ENCODE measurements at regions of chr15 and their contacts with region 1.

Region 1: GRCh38 chr15:33292717-33293307 is 18.0 kb upstream of the RYR3 start:
- DNase-seq: peak; percentile 79
- H3K4me3 Mint-ChIP-seq: no peak overlapping the region
- H3K27ac Mint-ChIP-seq: no peak overlapping the region
- H3K4me1 Mint-ChIP-seq: peaks cover 20% of the 10 kb centered on the region
- H3K27me3 Mint-ChIP-seq: no peaks in the 10 kb centered on the region
- CTCF ChIP-seq: peak; percentile 88

Region 2: DNA sequence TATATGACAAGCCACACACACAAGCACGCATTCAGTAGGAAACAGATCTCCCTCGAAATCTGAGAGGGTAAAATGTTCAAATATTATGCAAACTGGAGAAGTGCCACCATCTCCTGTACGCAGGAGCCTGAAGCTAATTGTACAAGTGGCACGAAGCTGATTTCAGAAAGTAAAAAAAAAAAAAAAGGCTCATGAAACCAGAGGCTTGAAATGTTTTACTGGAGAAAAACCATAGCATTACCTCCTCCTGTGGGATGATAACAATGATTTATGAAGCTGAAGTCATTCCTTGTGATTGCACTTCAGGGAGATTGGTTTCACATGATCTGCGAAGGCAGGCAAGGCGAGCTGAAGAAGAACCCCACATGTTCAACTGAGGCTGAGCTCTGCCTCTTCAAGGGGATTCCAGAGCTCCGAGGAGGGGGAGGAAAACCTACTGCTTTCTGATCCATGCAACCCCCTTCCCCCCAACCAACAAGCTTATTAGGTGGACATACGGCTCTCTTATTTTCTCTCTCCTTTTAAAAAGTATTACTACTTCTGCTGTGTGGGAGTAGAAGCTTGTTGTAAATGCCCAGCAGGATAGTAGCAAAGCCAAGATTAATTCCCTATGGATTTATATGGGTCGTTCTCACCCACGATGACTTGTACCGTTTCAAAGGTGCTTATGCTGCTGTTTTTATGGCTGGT is 473.9 kb before region 1 on chr15:
- CTCF ChIA-PET with region 1: no interaction called
- POLR2A ChIA-PET with region 1: no interaction called
- intact Hi-C with region 1: no loop called
- DNase-seq: no peak
- H3K4me3 Mint-ChIP-seq: no peak overlapping the region
- H3K27ac Mint-ChIP-seq: no peak overlapping the region
- H3K4me1 Mint-ChIP-seq: no peaks in the 10 kb centered on the region
- H3K27me3 Mint-ChIP-seq: no peaks in the 10 kb centered on the region
- CTCF ChIP-seq: no peak

Region 3: DNA sequence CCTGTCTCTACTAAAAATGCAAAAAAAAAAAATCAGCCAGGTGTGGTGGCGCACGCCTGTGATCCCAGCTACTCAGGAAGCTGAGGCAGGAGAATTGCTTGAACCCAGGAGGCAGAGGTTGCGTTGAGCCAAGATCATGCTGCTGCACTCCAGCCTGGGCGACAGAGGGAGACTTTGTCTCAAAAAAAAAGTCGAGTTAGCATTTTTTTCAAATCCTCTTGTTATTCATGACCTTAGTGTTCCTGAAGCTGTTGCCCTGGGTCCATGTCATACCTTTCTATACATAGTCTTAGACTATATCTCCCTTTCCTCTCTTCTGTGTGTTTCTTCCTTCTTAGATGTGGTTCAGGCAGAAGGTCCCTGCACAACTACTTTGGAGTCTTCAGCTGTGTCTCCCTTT is 104.7 kb before region 1 on chr15:
- CTCF ChIA-PET with region 1: no interaction called
- POLR2A ChIA-PET with region 1: no interaction called
- intact Hi-C with region 1: no loop called
- DNase-seq: no peak
- H3K4me3 Mint-ChIP-seq: no peak overlapping the region
- H3K27ac Mint-ChIP-seq: no peak overlapping the region
- H3K4me1 Mint-ChIP-seq: no peaks in the 10 kb centered on the region
- H3K27me3 Mint-ChIP-seq: peaks cover 17% of the 10 kb centered on the region
- CTCF ChIP-seq: no peak

Region 4: GRCh38 chr15:33234014-33234461 is 58.8 kb before region 1 on chr15:
- CTCF ChIA-PET with region 1: interaction called, 26 read pairs
- POLR2A ChIA-PET with region 1: no interaction called
- intact Hi-C with region 1: loop called (anchors 2 kb)
- DNase-seq: peak; percentile 73
- H3K4me3 Mint-ChIP-seq: no peak overlapping the region
- H3K27ac Mint-ChIP-seq: no peak overlapping the region
- H3K4me1 Mint-ChIP-seq: no peaks in the 10 kb centered on the region
- H3K27me3 Mint-ChIP-seq: no peaks in the 10 kb centered on the region
- CTCF ChIP-seq: peak; percentile 63

Region 5: DNA sequence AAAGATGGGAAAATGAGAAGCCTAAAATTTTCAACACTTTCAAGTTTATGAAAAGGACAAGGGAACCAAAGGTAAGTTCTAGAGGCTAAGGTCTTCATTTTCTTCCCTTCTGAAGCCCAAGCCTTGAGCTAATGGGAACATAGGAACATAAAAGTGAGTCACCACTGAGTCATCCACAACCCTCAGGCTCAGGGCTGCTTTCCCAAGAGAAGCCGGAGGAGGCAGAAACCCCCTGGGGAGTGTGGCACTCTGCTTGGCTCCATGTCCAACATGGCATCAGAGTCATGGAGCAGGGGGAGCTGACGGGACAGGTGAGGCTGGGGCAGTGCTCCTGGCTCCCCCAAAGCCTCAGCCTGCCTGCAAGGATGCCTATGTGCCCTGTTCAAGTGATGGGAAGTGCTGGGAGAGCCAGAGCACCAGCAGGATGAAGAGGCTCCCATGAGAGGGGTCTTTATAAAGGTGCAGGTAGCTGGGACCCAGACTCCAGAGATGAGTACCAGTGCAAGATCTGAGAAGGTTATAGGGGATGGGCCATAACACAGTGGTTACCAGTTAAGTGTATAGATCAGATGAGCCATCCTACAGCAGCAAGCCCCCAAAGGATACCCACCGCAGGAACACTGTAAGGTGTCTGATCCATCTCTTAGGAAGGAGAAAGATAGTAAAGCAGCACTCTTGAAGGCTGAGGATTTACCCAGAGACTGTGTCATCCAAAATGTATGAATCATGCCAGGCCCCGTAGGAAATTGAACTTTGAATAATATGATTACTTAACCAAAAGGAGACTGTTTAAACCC is 13.8 kb before region 1 on chr15:
- CTCF ChIA-PET with region 1: interaction called, 73 read pairs
- POLR2A ChIA-PET with region 1: interaction called, 3 read pairs
- intact Hi-C with region 1: no loop called
- DNase-seq: peak; percentile 97
- H3K4me3 Mint-ChIP-seq: peak overlapping the region; percentile 15
- H3K27ac Mint-ChIP-seq: peak overlapping the region; percentile 77
- H3K4me1 Mint-ChIP-seq: peaks cover 18% of the 10 kb centered on the region
- H3K27me3 Mint-ChIP-seq: no peaks in the 10 kb centered on the region
- CTCF ChIP-seq: peak; percentile 10

Region 6: DNA sequence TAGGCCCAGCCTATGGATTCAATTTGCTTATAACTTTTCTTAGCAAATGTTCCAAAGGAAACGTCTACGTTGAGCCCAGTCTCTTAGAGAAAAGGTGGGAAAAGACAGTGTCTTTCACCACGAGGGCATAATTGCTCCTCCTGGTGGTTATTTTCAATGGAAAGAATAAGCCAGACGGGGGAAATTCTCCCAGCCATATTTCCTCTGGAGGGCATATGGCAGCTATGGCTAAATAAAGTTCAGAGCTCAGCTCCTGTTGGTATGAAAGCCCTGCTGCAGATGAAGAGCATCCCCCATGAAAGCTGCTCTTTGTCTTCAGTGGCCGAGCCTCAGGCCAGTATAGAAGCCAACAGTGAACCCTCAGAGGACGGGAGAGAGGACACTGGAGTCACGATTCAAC is 315.9 kb after region 1 on chr15:
- CTCF ChIA-PET with region 1: interaction called, 3 read pairs
- POLR2A ChIA-PET with region 1: no interaction called
- intact Hi-C with region 1: loop called (anchors 1 kb)
- DNase-seq: peak; percentile 30
- H3K4me3 Mint-ChIP-seq: no peak overlapping the region
- H3K27ac Mint-ChIP-seq: no peak overlapping the region
- H3K4me1 Mint-ChIP-seq: no peaks in the 10 kb centered on the region
- H3K27me3 Mint-ChIP-seq: peaks cover 13% of the 10 kb centered on the region
- CTCF ChIP-seq: peak; percentile 21

Region 7: GRCh38 chr15:33693166-33693800 is 400.5 kb after region 1 on chr15:
- CTCF ChIA-PET with region 1: interaction called, 22 read pairs
- POLR2A ChIA-PET with region 1: no interaction called
- intact Hi-C with region 1: no loop called
- DNase-seq: no peak
- H3K4me3 Mint-ChIP-seq: no peak overlapping the region
- H3K27ac Mint-ChIP-seq: no peak overlapping the region
- H3K4me1 Mint-ChIP-seq: no peaks in the 10 kb centered on the region
- H3K27me3 Mint-ChIP-seq: peaks cover 15% of the 10 kb centered on the region
- CTCF ChIP-seq: no peak

Region 8: DNA sequence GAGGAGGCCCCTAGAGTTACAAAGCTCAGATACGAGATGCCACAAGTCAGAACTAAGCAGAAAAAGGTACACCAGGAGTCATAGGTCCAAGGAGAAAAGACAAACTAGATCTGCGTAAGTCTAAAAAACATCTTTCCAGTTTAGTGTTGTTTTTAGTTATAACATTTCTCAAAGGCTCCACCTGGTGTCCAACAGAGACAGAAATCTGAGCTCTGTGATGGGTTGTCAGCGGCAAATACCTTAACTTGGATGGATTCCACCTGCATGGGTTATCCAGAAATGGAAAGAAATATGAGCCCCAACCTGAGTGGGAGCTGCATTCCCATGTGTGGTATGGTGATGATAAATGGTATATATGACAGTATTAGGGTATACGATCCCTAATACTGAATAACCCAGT is 436.8 kb after region 1 on chr15:
- CTCF ChIA-PET with region 1: interaction called, 36 read pairs
- POLR2A ChIA-PET with region 1: no interaction called
- intact Hi-C with region 1: no loop called
- DNase-seq: peak; percentile 43
- H3K4me3 Mint-ChIP-seq: no peak overlapping the region
- H3K27ac Mint-ChIP-seq: no peak overlapping the region
- H3K4me1 Mint-ChIP-seq: no peaks in the 10 kb centered on the region
- H3K27me3 Mint-ChIP-seq: no peaks in the 10 kb centered on the region
- CTCF ChIP-seq: peak; percentile 39

Measured in MCF 10A (cell line).